Activated B cell treated with CpG ODN at 0.5 μM for 24 hours (primary cell): ENCODE measurements at regions of chr7 and their contacts with region 1.

Region 1: GRCh38 chr7:101602484-101603241 is 26.4 kb downstream of the MYL10 start:
- DNase-seq: peak; percentile 59
- ATAC-seq: peak; percentile 91
- H3K4me3 Mint-ChIP-seq: no peak overlapping the region
- H3K27ac Mint-ChIP-seq: no peak overlapping the region
- H3K4me1 Mint-ChIP-seq: no peaks in the 10 kb centered on the region
- H3K27me3 Mint-ChIP-seq: no peaks in the 10 kb centered on the region
- CTCF ChIP-seq: no peak

Region 2: DNA sequence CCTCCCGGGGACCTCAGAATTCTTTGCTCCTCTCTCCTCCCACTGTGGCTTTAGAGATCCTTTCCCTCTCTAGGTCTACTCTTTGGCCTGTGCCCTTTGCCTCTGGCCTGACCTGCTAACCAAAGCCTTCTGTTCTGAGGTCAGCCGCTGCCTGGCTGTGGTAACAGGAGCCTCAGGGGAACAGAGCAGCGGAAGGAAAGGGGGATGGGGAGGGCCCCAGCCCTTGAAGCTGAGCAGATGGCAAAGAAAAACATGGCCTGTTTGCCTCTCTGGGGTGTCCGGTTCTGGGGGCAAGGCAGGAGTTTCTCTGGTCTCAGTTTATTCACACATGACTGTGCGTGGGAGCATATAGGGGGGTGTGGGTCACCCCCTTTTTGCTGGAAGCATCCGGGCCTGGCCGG is 211.8 kb before region 1 on chr7:
- CTCF ChIA-PET with region 1: no interaction called
- POLR2A ChIA-PET with region 1: no interaction called
- intact Hi-C with region 1: no loop called
- DNase-seq: peak; percentile 41
- ATAC-seq: peak; percentile 96
- H3K4me3 Mint-ChIP-seq: peak overlapping the region; percentile 67
- H3K27ac Mint-ChIP-seq: peak overlapping the region; percentile 77
- H3K4me1 Mint-ChIP-seq: peaks cover 43% of the 10 kb centered on the region
- H3K27me3 Mint-ChIP-seq: peaks cover 5% of the 10 kb centered on the region
- CTCF ChIP-seq: no peak

Region 3: GRCh38 chr7:102236592-102237287 is 634.1 kb after region 1 on chr7:
- CTCF ChIA-PET with region 1: interaction called, 33 read pairs
- POLR2A ChIA-PET with region 1: no interaction called
- intact Hi-C with region 1: loop called (anchors 1 kb)
- DNase-seq: peak; percentile 39
- ATAC-seq: peak; percentile 70
- H3K4me3 Mint-ChIP-seq: no peak overlapping the region
- H3K27ac Mint-ChIP-seq: no peak overlapping the region
- H3K4me1 Mint-ChIP-seq: no peaks in the 10 kb centered on the region
- H3K27me3 Mint-ChIP-seq: no peaks in the 10 kb centered on the region
- CTCF ChIP-seq: peak; percentile 26

Region 4: DNA sequence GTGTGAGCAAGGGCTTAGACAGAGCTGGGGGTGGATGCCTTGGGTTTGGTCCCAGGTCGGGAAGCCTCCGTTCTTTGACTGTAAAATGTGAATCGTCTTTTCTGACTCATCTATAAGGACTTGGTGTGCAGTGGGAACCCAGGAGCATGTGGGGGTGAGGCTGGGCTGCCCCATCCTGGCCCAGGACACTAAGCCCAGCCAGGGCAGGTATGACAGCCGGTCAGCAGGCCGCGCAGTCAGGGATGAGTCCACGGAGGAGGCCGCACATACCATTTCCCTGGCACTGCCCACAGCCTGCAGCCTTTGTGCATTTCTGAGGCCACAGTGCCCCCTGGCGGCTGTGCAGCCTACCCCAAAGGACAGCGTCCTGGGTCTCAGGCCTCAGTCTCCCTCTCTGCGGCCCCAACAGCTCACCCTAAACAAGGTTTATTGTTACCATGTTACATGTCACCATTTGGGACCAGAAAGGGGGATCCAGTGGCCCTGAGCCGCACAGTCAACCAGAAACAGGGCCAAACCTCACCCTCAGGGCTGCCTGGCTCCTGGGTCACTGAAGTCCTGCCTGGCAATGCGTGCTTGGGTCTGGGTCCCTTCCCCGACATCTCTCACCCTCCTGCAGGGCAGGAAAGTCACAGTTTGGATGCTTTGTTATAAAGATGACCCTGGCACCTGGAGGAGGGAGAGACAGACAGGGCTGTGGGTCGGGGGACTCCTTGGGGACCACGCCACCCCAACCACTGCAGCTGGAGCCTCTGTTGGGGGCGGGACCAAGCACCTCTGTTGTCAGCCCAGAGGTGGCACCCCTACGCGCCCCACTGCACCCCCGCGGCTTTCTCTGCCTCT is 669.6 kb after region 1 on chr7:
- CTCF ChIA-PET with region 1: interaction called, 24 read pairs
- POLR2A ChIA-PET with region 1: no interaction called
- intact Hi-C with region 1: no loop called
- DNase-seq: peak; percentile 80
- ATAC-seq: peak; percentile 92
- H3K4me3 Mint-ChIP-seq: no peak overlapping the region
- H3K27ac Mint-ChIP-seq: no peak overlapping the region
- H3K4me1 Mint-ChIP-seq: peaks cover 4% of the 10 kb centered on the region
- H3K27me3 Mint-ChIP-seq: no peaks in the 10 kb centered on the region
- CTCF ChIP-seq: peak; percentile 28